ENCODE measurements at regions of chr3 and their contacts with region 1.

Region 1: DNA sequence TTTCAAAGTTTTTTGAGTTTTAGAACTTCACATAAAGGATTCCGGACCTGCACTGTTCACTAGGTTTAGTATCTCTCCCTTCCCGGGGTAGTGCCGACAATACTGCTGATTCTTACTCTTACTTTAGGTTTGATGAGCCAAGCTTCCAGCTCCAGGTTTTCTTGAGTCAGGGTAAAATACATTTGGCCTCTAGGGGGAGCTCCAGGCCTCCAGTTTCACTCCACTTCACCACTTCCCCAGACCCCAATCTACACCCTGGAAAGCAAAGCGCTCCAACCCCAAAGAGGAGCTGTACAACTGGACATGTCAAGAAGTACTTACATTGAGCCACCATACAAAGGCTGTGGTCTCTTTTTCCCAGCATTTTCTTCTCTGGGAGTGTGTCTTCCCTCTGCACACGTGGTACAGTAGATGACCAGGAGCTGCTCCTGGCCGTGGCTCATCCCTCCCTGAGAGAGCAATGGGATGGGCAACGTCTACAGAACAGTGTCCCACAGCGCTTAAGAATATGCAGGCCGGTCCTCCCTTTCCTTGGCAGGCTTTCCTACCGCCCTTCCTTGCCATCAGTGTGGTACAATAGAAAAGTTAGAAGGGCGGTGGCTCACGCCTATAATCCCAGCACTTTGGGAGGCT is 93.9 kb upstream of the CCDC80 start:
- DNase-seq: peak; percentile 79
- H3K4me3 Mint-ChIP-seq: no peak overlapping the region
- H3K27ac Mint-ChIP-seq: no peak overlapping the region
- H3K4me1 Mint-ChIP-seq: peaks cover 39% of the 10 kb centered on the region
- H3K27me3 Mint-ChIP-seq: no peaks in the 10 kb centered on the region

Region 2: DNA sequence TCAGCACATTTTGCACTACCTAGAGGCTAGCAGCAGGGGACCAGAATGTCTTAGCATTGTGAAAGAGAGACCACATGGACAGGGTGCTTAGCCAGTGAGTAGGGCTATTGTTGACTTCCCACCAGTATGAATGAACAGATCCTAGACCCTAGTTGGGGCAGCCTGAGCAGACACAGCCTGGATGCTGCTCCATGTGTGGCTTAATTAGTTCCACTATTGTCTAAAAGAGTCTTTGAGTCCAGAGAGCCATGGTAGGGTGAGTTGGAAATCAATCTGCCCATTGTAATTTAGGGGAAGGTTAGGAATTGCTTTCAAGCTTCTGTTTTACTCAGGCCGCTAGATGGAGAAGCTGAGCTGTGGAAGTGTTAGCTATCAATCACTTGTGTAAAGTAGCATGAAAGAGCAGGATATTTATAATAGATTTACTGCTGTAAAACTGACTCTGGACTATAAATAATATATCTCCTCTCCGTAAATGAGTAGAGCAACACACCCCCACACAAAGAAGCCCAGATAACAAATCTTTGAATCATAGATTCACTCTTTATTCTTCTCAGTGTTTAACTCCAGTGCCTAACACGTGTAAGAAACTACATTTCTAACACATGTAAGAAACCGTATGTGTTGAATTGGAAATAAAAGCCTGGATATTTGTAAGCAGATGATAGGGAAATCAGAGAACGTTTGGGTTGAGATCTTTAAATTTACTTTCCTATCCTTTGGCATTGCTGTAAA is 597.7 kb before region 1 on chr3:
- CTCF ChIA-PET with region 1: no interaction called
- intact Hi-C with region 1: loop called (anchors 5 kb)
- DNase-seq: peak; percentile 81
- H3K4me3 Mint-ChIP-seq: no peak overlapping the region
- H3K27ac Mint-ChIP-seq: no peak overlapping the region
- H3K4me1 Mint-ChIP-seq: peaks cover 64% of the 10 kb centered on the region
- H3K27me3 Mint-ChIP-seq: no peaks in the 10 kb centered on the region

Region 3: GRCh38 chr3:112531358-112531781 is 203.5 kb before region 1 on chr3:
- CTCF ChIA-PET with region 1: no interaction called
- intact Hi-C with region 1: no loop called
- DNase-seq: no peak
- H3K4me3 Mint-ChIP-seq: no peak overlapping the region
- H3K27ac Mint-ChIP-seq: peak overlapping the region; percentile 62
- H3K4me1 Mint-ChIP-seq: peaks cover 11% of the 10 kb centered on the region
- H3K27me3 Mint-ChIP-seq: no peaks in the 10 kb centered on the region

Region 4: DNA sequence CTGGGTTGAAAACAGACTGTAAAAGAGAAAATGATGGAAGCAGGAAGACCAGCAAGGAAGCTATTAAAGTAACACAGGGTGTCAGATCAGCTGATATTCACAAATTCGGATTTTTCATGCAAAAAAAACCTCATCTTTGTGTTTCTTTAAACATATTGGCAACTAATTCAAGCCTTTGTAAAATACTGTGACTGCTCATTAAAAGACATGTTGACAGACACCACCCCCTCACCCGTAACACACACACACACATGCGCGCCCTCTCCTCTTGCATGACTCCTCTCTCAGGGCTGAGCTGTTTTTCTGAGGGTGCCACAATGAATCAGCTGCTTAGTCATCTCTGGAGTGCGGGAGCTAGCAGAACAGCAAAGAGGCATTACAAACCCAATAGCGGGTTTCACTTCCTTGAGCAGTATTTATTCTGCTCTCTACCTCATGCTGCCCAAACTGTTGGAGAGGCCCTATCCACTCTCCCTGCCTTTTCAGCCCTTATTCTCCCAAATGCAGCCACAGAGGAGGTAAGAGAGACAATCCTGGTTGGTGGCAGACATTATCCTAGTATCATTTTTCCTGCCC is 58.1 kb before region 1 on chr3:
- CTCF ChIA-PET with region 1: no interaction called
- intact Hi-C with region 1: loop called (anchors 2 kb)
- DNase-seq: peak; percentile 97
- H3K4me3 Mint-ChIP-seq: peak overlapping the region; percentile 14
- H3K27ac Mint-ChIP-seq: peak overlapping the region; percentile 54
- H3K4me1 Mint-ChIP-seq: peaks cover 42% of the 10 kb centered on the region
- H3K27me3 Mint-ChIP-seq: peaks cover 14% of the 10 kb centered on the region

Region 5: DNA sequence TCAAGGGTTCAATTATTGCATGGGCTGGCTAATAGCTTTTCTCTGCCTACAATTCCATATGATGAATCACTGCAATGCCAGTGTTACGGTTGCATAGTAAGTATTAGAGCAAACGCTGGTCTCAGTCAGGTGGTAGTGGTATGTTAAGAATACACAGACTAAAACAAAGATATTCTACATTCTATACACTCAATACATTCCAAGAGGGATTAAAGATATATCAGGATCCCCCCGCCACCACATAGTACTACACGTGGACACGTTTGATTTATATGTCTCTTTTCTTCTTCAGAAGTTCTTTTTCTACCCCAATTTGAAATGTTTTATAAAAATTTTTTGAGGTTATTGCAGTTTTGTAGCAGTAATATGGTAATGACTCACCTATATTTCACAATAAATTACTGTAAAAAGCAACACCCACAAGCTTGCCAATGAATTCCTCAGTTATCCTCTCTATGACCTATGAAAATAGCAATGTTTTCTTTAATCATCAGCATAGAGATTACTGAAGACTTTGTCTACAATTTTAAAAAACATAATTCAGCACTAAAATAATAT is 43.6 kb after region 1 on chr3:
- CTCF ChIA-PET with region 1: interaction called, 12 read pairs
- intact Hi-C with region 1: no loop called
- DNase-seq: no peak
- H3K4me3 Mint-ChIP-seq: no peak overlapping the region
- H3K27ac Mint-ChIP-seq: no peak overlapping the region
- H3K4me1 Mint-ChIP-seq: peaks cover 15% of the 10 kb centered on the region
- H3K27me3 Mint-ChIP-seq: no peaks in the 10 kb centered on the region

Region 6: GRCh38 chr3:112973325-112974177 is 238.7 kb after region 1 on chr3:
- CTCF ChIA-PET with region 1: interaction called, 53 read pairs
- intact Hi-C with region 1: loop called (anchors 1 kb)
- DNase-seq: peak; percentile 66
- H3K4me3 Mint-ChIP-seq: peak overlapping the region; percentile 70
- H3K27ac Mint-ChIP-seq: peak overlapping the region; percentile 52
- H3K4me1 Mint-ChIP-seq: peaks cover 82% of the 10 kb centered on the region
- H3K27me3 Mint-ChIP-seq: no peaks in the 10 kb centered on the region

Region 7: DNA sequence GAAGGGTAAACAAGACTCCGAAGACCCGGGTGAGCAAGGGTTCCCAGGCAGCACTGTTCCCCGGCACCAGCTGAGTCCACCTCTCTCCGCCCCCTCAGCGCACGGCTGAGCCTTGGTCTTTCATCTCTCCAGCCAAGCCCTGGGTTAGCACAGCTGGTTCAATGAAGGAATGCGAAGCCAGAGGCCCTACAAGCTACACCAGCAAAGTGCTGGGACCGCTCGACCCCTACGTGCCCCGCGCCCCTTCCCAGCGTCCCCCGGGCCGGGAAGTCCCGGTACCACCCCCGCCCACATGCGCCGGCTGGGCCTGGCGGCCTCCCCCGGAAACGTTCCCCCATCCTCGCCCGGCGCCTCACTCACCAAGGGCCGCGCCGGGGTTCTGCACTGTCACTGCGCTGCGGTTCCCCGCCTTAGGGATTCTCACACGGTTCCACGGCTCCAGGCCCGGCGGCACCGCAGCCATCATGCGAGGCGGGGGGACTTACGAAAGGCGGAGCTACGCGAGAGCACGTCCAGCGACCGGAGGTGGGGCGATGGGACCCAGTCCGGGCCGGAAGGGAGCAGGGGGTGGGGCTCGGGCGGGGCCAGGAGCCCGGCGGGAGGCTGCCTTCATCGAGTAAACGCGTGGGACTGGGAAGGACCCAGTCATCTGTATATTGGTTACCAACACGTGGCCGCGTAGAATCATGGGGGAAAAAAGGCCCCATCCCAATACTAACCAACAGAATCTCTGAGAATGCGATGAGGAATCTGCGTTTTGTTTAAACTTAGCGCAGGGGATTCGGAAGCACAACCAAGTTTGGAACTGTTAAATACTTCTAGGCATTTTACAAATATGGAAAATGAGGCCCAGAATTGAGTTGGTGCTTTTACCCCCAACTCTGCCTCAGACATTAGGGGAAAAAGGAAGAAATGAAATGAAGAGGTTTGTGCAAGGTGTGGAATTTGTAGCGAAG is 284.6 kb after region 1 on chr3:
- CTCF ChIA-PET with region 1: no interaction called
- intact Hi-C with region 1: loop called (anchors 1 kb)
- DNase-seq: peak; percentile 94
- H3K4me3 Mint-ChIP-seq: peak overlapping the region; percentile 94
- H3K27ac Mint-ChIP-seq: peak overlapping the region; percentile 99
- H3K4me1 Mint-ChIP-seq: peaks cover 64% of the 10 kb centered on the region
- H3K27me3 Mint-ChIP-seq: no peaks in the 10 kb centered on the region

Measured in activated naive CD4-positive, alpha-beta T cell treated with anti-CD3 and anti-CD28 coated beads for 36 hours (primary cell).